ENCODE measurements at regions of chr9 and their contacts with region 1.

Region 1: GRCh38 chr9:35748858-35749514 is at the starts of genes GBA2 and RGP1:
- DNase-seq: peak; percentile 77
- H3K4me3 Mint-ChIP-seq: peak within 1 kb of the TSS; percentile 94
- H3K27ac Mint-ChIP-seq: peak within 1 kb of the TSS; percentile 85
- H3K4me1 Mint-ChIP-seq: peaks cover 31% of the 10 kb centered on the region
- H3K27me3 Mint-ChIP-seq: no peaks in the 10 kb centered on the region
- CTCF ChIP-seq: no peak
- total RNA-seq, gene GBA2: 51.3 and 55.2 TPM in 2 replicates
- total RNA-seq, gene RGP1: 33.8 and 35.8 TPM in 2 replicates

Region 2: DNA sequence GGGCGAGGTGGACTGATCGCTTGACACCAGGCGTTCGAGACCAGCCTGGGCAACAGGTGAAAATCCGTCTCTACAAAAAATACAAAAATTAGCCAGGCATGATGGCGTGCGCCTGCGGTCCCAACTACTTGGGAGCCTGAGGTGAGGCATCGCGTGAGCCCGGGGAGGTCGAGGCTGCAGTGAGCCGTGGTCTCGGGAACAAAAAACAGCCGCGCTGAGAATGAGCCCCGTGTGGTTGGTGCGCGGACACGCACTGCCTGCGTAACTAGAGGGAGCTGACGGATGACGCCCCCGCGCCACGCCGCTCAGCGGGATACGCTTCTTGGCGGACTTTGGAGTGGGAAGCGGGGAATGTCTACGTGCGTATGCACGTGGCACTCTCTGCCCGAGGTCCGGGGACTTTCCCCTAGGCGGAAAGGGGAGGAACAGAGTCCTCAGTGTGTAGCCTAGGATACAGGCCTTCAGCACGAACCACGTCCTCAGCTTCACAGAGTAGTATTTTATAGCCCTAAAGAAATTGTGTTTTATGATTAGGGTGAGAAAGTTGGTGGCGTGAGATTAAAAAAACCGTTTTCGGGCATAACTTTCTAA is 91.3 kb before region 1 on chr9 and contains the start of gene RMRP:
- CTCF ChIA-PET with region 1: interaction called, 5 read pairs
- POLR2A ChIA-PET with region 1: interaction called, 25 read pairs
- intact Hi-C with region 1: no loop called
- DNase-seq: peak; percentile 99
- H3K4me3 Mint-ChIP-seq: peak within 1 kb of the TSS; percentile 62
- H3K27ac Mint-ChIP-seq: peak within 1 kb of the TSS; percentile 100
- H3K4me1 Mint-ChIP-seq: peaks cover 21% of the 10 kb centered on the region
- H3K27me3 Mint-ChIP-seq: no peaks in the 10 kb centered on the region
- CTCF ChIP-seq: no peak
- total RNA-seq, gene RMRP: 13,245 and 17,503 TPM in 2 replicates

Region 3: DNA sequence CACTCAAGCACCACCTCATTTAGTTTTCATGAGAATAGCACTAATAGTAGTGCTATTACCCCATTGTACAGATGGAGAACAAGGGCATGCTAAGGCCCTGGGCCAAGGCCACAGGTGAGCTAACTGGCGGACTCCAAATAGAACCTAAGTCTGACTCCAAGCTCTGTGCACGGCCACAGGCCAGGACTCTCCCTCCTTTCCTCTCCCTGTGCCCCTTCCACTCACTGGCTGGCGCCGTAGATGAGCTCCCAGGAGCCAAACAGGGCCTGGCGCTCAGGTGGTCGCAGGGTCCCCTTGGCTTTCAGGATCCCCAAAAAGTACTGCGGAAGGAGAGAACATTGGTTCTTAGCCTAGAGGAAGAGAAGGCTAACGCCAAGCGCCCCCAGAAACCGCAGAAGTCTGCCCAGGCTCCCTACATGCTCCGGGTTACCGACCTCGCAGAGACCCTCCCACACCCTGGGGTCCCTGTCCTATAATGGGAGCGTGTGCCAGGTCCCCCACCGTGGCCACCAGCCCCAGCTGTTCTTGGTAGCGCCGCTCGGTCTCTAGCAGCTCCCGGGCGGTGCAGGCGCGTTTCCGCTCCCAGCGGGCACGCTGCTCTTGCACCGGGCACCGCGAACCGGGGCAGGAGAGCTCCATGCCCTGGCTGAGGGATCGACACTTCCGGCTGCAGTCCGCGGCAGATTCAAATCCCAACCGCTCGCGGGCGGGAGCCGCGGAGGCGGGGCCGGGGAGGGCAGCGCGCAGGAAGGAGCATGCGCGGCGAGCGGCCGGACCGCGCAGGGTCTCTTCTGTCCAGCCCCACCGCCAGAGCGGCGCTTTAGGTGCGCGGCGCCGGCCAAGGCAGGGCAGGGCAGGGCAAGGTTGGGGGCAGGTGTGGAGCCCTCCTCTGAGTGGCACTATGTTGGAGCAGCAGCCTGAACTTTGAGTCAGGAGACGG is 84.2 kb before region 1 on chr9 and contains the start of gene ARHGEF39:
- CTCF ChIA-PET with region 1: interaction called, 4 read pairs
- POLR2A ChIA-PET with region 1: interaction called, 18 read pairs
- intact Hi-C with region 1: no loop called
- DNase-seq: peak; percentile 83
- H3K4me3 Mint-ChIP-seq: peak within 1 kb of the TSS; percentile 86
- H3K27ac Mint-ChIP-seq: no peak within 1 kb of the TSS
- H3K4me1 Mint-ChIP-seq: peaks cover 21% of the 10 kb centered on the region
- H3K27me3 Mint-ChIP-seq: no peaks in the 10 kb centered on the region
- CTCF ChIP-seq: no peak
- total RNA-seq, gene ARHGEF39: 2.9 and 5.1 TPM in 2 replicates

Region 4: GRCh38 chr9:35774907-35775635 is 26.1 kb after region 1 on chr9:
- CTCF ChIA-PET with region 1: interaction called, 5 read pairs
- POLR2A ChIA-PET with region 1: interaction called, 18 read pairs
- intact Hi-C with region 1: loop called (anchors 5 kb)
- DNase-seq: no peak
- H3K4me3 Mint-ChIP-seq: no peak overlapping the region
- H3K27ac Mint-ChIP-seq: no peak overlapping the region
- H3K4me1 Mint-ChIP-seq: no peaks in the 10 kb centered on the region
- H3K27me3 Mint-ChIP-seq: no peaks in the 10 kb centered on the region
- CTCF ChIP-seq: no peak

Region 5: GRCh38 chr9:35781066-35781465 is 32.1 kb after region 1 on chr9:
- CTCF ChIA-PET with region 1: interaction called, 3 read pairs
- POLR2A ChIA-PET with region 1: interaction called, 3 read pairs
- intact Hi-C with region 1: loop called (anchors 5 kb)
- DNase-seq: no peak
- H3K4me3 Mint-ChIP-seq: no peak overlapping the region
- H3K27ac Mint-ChIP-seq: no peak overlapping the region
- H3K4me1 Mint-ChIP-seq: no peaks in the 10 kb centered on the region
- H3K27me3 Mint-ChIP-seq: no peaks in the 10 kb centered on the region
- CTCF ChIP-seq: no peak

Region 6: DNA sequence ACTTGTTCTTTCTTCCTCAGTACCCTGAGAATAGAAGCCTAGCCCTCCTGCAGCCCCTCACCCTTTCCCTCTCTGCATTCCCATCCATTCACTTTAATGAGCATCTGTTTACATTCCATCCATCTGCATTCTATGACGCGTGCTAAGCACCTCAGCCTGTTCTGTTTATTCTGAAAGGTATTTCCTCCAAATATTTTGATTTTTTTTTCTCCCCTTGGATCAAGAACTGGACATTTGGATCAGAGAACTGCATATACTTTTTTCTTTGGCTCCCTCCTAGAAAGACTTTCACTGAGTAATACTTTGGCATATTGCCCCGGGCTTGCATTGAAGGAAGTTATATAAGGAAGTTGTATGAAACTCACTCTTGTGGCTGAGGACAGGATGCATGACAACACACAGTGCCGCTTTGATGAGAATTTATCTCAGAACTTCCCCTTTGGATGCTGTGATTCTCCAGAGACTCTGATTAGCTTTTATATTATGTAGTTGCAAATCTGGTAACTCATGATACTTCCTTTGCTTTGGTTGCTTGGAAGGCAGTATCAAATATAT is 95.8 kb after region 1 on chr9:
- CTCF ChIA-PET with region 1: no interaction called
- POLR2A ChIA-PET with region 1: no interaction called
- intact Hi-C with region 1: no loop called
- DNase-seq: peak; percentile 87
- H3K4me3 Mint-ChIP-seq: no peak overlapping the region
- H3K27ac Mint-ChIP-seq: peak overlapping the region; percentile 14
- H3K4me1 Mint-ChIP-seq: peaks cover 28% of the 10 kb centered on the region
- H3K27me3 Mint-ChIP-seq: no peaks in the 10 kb centered on the region
- CTCF ChIP-seq: no peak

Region 7: GRCh38 chr9:35910613-35911359 is 161.8 kb after region 1 on chr9:
- CTCF ChIA-PET with region 1: no interaction called
- POLR2A ChIA-PET with region 1: interaction called, 22 read pairs
- intact Hi-C with region 1: no loop called
- DNase-seq: peak; percentile 86
- H3K4me3 Mint-ChIP-seq: peak overlapping the region; percentile 53
- H3K27ac Mint-ChIP-seq: peak overlapping the region; percentile 88
- H3K4me1 Mint-ChIP-seq: peaks cover 42% of the 10 kb centered on the region
- H3K27me3 Mint-ChIP-seq: no peaks in the 10 kb centered on the region
- CTCF ChIP-seq: peak; percentile 55